ENCODE measurements at regions of chr3 and their contacts with region 1.

Region 1: DNA sequence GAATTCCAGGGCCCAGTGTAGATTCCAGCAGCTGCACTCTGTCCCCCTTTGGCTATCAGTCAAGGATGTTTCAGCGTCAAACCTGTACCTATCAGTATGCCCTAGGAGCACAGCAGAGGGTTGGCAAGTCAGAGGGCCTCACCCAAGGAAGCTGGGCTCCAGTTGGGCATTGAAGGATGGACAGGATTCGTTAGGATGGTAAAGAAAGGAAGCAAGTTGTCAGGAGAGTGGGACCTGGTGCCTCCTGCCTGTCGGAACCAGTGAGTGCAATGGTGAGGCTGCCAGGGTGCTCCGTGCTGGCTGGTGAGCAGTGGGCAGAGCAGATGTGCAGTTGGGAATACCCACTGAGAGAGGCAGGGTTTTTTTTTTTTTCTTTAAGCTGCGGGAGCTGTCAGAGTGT is 157.2 kb downstream of the CHDH start:
- DNase-seq: no peak
- H3K4me3 ChIP-seq: no peak overlapping the region
- H3K27ac ChIP-seq: no peak overlapping the region
- H3K4me1 ChIP-seq: no peaks in the 10 kb centered on the region
- H3K27me3 ChIP-seq: no peaks in the 10 kb centered on the region
- CTCF ChIP-seq: no peak
- POLR2A ChIP-seq: no peak

Region 2: DNA sequence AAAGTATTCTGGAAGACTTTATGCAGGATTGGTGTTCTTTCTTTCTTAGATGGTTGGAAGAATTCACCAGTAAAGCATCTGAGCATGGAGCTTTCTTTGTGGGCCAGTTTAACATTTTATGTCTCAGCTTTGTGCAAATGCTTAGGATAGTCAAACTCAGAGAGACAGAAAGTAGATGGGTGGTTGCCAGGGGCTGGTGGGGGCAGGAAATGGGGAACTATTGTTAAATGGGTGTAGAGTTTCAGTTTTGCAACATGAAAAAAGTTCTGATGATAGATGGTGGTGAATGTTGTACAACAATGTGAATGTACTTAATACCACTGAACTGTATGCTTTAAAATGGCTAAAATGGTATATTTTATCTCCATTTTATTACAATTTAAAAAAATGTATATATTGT is 958.3 kb before region 1 on chr3:
- intact Hi-C with region 1: no loop called
- DNase-seq: no peak
- H3K4me3 ChIP-seq: no peak overlapping the region
- H3K27ac ChIP-seq: no peak overlapping the region
- H3K4me1 ChIP-seq: no peaks in the 10 kb centered on the region
- H3K27me3 ChIP-seq: no peaks in the 10 kb centered on the region
- CTCF ChIP-seq: no peak
- POLR2A ChIP-seq: no peak

Region 3: GRCh38 chr3:53677413-53677812 is 11.6 kb before region 1 on chr3:
- intact Hi-C with region 1: loop called (anchors 1 kb)
- DNase-seq: no peak
- H3K4me3 ChIP-seq: no peak overlapping the region
- H3K27ac ChIP-seq: no peak overlapping the region
- H3K4me1 ChIP-seq: no peaks in the 10 kb centered on the region
- H3K27me3 ChIP-seq: no peaks in the 10 kb centered on the region
- CTCF ChIP-seq: no peak
- POLR2A ChIP-seq: no peak

Measured in breast epithelium (tissue), 4 donors.